ENCODE measurements at regions of chr3 and their contacts with region 1.

Region 1: GRCh38 chr3:17817545-17817944 is 75.1 kb upstream of the TBC1D5 start:
- DNase-seq: no peak
- ATAC-seq: no peak
- H3K4me3 ChIP-seq: no peak overlapping the region
- H3K4me3 Mint-ChIP-seq: no peak overlapping the region
- H3K27ac ChIP-seq: no peak overlapping the region
- H3K27ac Mint-ChIP-seq: no peak overlapping the region
- H3K4me1 ChIP-seq: no peaks in the 10 kb centered on the region
- H3K4me1 Mint-ChIP-seq: no peaks in the 10 kb centered on the region
- H3K27me3 ChIP-seq: no peaks in the 10 kb centered on the region
- H3K27me3 Mint-ChIP-seq: no peaks in the 10 kb centered on the region
- CTCF ChIP-seq: no peak

Region 2: GRCh38 chr3:17805436-17805940 is 12.1 kb before region 1 on chr3:
- CTCF ChIA-PET with region 1: no interaction called
- POLR2A ChIA-PET with region 1: no interaction called
- intact Hi-C with region 1: loop called in 1 of 2 experiments (anchors 1 kb)
- DNase-seq: no peak
- ATAC-seq: no peak
- H3K4me3 ChIP-seq: no peak overlapping the region
- H3K4me3 Mint-ChIP-seq: no peak overlapping the region
- H3K27ac ChIP-seq: no peak overlapping the region
- H3K27ac Mint-ChIP-seq: no peak overlapping the region
- H3K4me1 ChIP-seq: peaks cover 8% of the 10 kb centered on the region
- H3K4me1 Mint-ChIP-seq: peaks cover 12% of the 10 kb centered on the region
- H3K27me3 ChIP-seq: peaks cover 0 to 2% of the 10 kb centered on the region in 2 experiments
- H3K27me3 Mint-ChIP-seq: peaks cover 9% of the 10 kb centered on the region
- CTCF ChIP-seq: no peak

Measured in CD8-positive, alpha-beta T cell (primary cell).